MCF 10A (cell line): ENCODE measurements at regions of chr7 and their contacts with region 1.

Region 1: DNA sequence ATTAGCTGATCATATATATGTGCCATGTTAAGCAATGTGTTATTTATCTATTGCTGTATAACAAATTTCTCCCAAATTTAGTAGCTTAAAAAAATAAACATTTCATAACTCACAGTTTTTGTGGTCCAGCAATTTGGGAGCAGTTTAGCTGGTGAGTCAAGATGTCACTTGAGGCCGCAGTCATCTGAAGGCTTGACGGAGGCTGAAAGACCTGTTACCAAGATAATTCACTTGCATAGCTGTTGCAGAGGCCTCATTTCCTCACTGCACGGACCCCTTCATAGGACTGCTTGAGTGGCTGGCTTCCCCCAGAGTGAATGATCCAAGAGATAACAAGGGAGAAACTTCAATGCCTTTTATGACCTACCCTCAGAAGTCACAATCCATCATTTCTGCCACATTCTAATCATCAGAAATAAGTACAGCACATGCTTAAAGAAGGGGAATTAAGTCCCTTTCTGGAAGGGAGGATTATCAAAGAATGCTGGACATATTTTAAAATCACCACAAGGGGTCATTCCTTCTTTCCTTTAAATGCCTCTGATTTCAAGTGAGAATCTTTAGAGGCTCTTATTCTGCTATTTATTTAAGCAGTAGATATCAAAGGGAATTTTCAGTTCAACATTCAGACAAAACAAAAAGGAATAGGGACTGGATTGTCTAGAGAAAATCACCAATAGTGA is 10.5 kb upstream of the SRPK2 start:
- DNase-seq: no peak
- H3K4me3 Mint-ChIP-seq: no peak overlapping the region
- H3K27ac Mint-ChIP-seq: no peak overlapping the region
- H3K4me1 Mint-ChIP-seq: peaks cover 7% of the 10 kb centered on the region
- H3K27me3 Mint-ChIP-seq: no peaks in the 10 kb centered on the region
- CTCF ChIP-seq: peak; percentile 31

Region 2: GRCh38 chr7:105219780-105220160 is 179.4 kb before region 1 on chr7:
- CTCF ChIA-PET with region 1: no interaction called
- POLR2A ChIA-PET with region 1: no interaction called
- intact Hi-C with region 1: no loop called
- DNase-seq: peak; percentile 71
- H3K4me3 Mint-ChIP-seq: peak overlapping the region; percentile 50
- H3K27ac Mint-ChIP-seq: peak overlapping the region; percentile 65
- H3K4me1 Mint-ChIP-seq: peaks cover 51% of the 10 kb centered on the region
- H3K27me3 Mint-ChIP-seq: no peaks in the 10 kb centered on the region
- CTCF ChIP-seq: no peak

Region 3: DNA sequence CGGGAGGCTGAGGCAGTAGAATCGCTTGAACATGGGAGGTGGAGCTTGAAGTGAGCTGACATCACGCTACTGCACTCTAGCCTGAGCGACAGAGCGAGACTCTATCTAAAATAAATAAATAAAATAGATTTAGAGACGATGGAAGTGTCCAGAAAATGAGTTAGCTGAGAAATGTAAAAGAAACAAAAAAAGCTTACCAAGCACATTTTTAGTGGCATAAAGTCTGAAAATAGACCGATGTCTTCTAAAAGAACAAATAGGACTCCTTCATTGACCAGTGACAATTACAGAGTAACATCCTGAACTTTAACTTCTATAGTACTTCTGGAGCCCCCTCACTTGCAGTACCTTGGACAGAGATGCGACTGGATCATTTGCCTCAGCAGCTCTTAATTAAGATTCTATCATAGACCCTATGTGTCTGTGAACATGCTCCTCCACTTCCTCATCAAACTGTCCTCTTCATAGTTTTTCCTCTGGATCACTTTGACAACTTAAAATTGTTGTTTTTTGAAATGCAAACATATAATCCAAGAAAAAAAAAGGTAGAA is 14.8 kb after region 1 on chr7:
- CTCF ChIA-PET with region 1: interaction called, 12 read pairs
- POLR2A ChIA-PET with region 1: interaction called, 3 read pairs
- intact Hi-C with region 1: no loop called
- DNase-seq: no peak
- H3K4me3 Mint-ChIP-seq: no peak overlapping the region
- H3K27ac Mint-ChIP-seq: no peak overlapping the region
- H3K4me1 Mint-ChIP-seq: no peaks in the 10 kb centered on the region
- H3K27me3 Mint-ChIP-seq: no peaks in the 10 kb centered on the region
- CTCF ChIP-seq: no peak

Region 4: DNA sequence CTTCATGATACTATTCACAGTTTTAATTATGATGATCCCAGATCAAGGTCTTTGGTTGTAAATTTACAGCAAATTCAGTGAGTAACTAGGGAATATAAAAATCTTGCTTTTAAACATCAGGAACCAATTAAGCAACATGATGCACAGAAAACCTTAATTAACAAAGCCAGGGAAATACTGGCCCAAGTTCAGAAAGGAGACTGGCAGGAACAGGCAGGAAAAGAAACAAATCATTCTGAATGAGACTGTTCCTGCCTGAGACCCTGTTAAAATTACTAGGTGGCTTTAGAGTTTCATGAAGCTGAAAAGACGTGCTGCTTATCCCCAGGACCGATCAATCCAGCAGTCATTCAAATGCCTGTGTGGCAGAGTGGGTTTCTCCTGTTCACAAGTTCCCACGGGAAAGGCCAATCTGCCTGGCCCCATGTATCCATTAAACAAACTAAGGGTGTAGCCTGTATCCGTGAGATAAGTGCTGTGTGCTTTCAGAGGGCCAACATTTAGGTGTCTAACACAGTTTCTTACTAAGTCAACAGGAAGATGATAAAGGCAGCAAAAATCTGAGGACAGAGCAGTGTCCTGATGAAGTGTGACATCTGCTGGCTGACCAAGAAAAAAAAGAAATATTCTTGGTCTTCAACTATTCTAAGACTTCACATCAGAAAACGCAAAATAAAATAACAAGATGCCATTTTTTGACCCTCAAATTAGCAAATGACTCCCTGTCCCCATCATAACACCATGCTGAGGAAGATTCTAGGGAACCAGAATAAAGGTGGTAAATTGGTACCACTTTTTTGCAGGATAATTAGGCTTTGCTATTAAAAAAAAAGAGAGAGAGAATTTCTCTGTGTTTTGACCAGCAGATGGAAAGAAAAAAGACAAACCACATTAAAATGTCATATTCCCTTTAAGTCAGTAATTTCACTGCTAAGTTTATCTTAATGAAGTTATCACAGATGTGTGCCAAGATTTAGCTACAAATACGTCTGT is 88.7 kb after region 1 on chr7:
- CTCF ChIA-PET with region 1: interaction called, 7 read pairs
- POLR2A ChIA-PET with region 1: no interaction called
- intact Hi-C with region 1: loop called (anchors 1 kb)
- DNase-seq: peak; percentile 23
- H3K4me3 Mint-ChIP-seq: no peak overlapping the region
- H3K27ac Mint-ChIP-seq: peak overlapping the region; percentile 67
- H3K4me1 Mint-ChIP-seq: no peaks in the 10 kb centered on the region
- H3K27me3 Mint-ChIP-seq: no peaks in the 10 kb centered on the region
- CTCF ChIP-seq: peak; percentile 43

Region 5: GRCh38 chr7:105589356-105590077 is 190.3 kb after region 1 on chr7:
- CTCF ChIA-PET with region 1: no interaction called
- POLR2A ChIA-PET with region 1: no interaction called
- intact Hi-C with region 1: loop called (anchors 1 kb)
- DNase-seq: peak; percentile 83
- H3K4me3 Mint-ChIP-seq: no peak overlapping the region
- H3K27ac Mint-ChIP-seq: no peak overlapping the region
- H3K4me1 Mint-ChIP-seq: no peaks in the 10 kb centered on the region
- H3K27me3 Mint-ChIP-seq: no peaks in the 10 kb centered on the region
- CTCF ChIP-seq: peak; percentile 58